IMR-90 (cell line): ENCODE measurements at regions of chr3 and their contacts with region 1.

Region 1: DNA sequence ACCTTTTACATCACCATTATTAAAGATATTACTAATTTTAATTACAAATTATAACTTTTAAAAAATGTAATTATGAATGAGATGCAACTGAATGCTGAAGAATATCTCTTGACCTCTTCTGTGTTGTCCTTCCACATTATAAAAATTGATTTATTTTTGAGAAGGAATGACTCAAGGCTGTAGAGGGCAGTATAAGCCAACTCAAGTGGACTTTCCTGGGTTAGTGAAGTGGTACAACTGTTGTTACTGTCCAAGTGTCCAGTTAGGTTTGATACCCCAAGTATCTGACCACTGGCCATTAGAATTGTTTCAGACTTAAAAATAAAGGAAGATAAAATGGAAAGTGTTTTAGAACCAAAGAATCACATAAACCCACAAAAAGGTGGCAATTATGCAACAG is 51.9 kb downstream of the BBX start:
- DNase-seq: peak; percentile 51
- ATAC-seq: peak; percentile 82
- H3K4me3 ChIP-seq: no peak overlapping the region
- H3K27ac ChIP-seq: no peak overlapping the region
- H3K4me1 ChIP-seq: no peaks in the 10 kb centered on the region
- H3K27me3 ChIP-seq: no peaks in the 10 kb centered on the region
- CTCF ChIP-seq: peak; percentile 61
- POLR2A ChIP-seq: no peak
- RAD21 ChIP-seq: peak; percentile 68

Region 2: GRCh38 chr3:107660306-107660976 is 85.8 kb after region 1 on chr3:
- CTCF ChIA-PET with region 1: interaction called, 3 read pairs
- POLR2A ChIA-PET with region 1: no interaction called
- dilution Hi-C with region 1: no loop called
- in situ Hi-C with region 1: no loop called
- intact Hi-C with region 1: loop called (anchors 5 kb)
- DNase-seq: peak; percentile 77
- ATAC-seq: peak; percentile 41
- H3K4me3 ChIP-seq: no peak overlapping the region
- H3K27ac ChIP-seq: peak overlapping the region; percentile 31; the same call in 1 of the 2 replicates
- H3K4me1 ChIP-seq: peaks cover 5% of the 10 kb centered on the region
- H3K27me3 ChIP-seq: no peaks in the 10 kb centered on the region
- CTCF ChIP-seq: peak; percentile 75
- POLR2A ChIP-seq: no peak
- RAD21 ChIP-seq: peak; percentile 59